ENCODE measurements at regions of chr22 and their contacts with region 1.

Region 1: GRCh38 chr22:45651931-45652528 is 19.6 kb upstream of the ATXN10 start:
- DNase-seq: no peak
- ATAC-seq: no peak
- H3K4me3 ChIP-seq: peak overlapping the region in 1 of 3 experiments; percentile 57; a peak in 2 of 6 replicates
- H3K27ac ChIP-seq: peak overlapping the region; percentile 77
- H3K4me1 ChIP-seq: peaks cover 72% of the 10 kb centered on the region
- H3K27me3 ChIP-seq: no peaks in the 10 kb centered on the region
- CTCF ChIP-seq: peak; percentile 20; the same call in 1 of the 2 replicates
- EP300 ChIP-seq: no peak
- POLR2A ChIP-seq: no peak
- RAD21 ChIP-seq: no peak

Region 2: GRCh38 chr22:45638834-45639746 is 12.9 kb before region 1 on chr22:
- CTCF ChIA-PET with region 1: no interaction called
- POLR2A ChIA-PET with region 1: no interaction called
- in situ Hi-C with region 1: no loop called
- intact Hi-C with region 1: no loop called
- DNase-seq: peak; percentile 57
- ATAC-seq: peak; percentile 65
- H3K4me3 ChIP-seq: peak overlapping the region in 2 of 3 experiments; percentile 31 to 50; a peak in 3 of 6 replicates
- H3K27ac ChIP-seq: no peak overlapping the region
- H3K4me1 ChIP-seq: peaks cover 65% of the 10 kb centered on the region
- H3K27me3 ChIP-seq: no peaks in the 10 kb centered on the region; a peak in 1 of 5 replicates
- CTCF ChIP-seq: peak; percentile 30
- EP300 ChIP-seq: no peak; a peak in 1 of 4 replicates
- POLR2A ChIP-seq: no peak
- RAD21 ChIP-seq: no peak

Region 3: GRCh38 chr22:45671768-45672563 is 19.9 kb after region 1 on chr22 and contains the start of gene ATXN10:
- CTCF ChIA-PET with region 1: no interaction called
- POLR2A ChIA-PET with region 1: interaction called, 7 read pairs
- in situ Hi-C with region 1: no loop called
- intact Hi-C with region 1: loop called (anchors 2 kb)
- DNase-seq: peak; percentile 49
- ATAC-seq: peak; percentile 87
- H3K4me3 ChIP-seq: peak within 1 kb of the TSS; percentile 60 to 97 (median 74)
- H3K27ac ChIP-seq: peak within 1 kb of the TSS; percentile 85
- H3K4me1 ChIP-seq: peaks cover 70% of the 10 kb centered on the region
- H3K27me3 ChIP-seq: no peaks in the 10 kb centered on the region
- CTCF ChIP-seq: no peak
- EP300 ChIP-seq: 0 out of 4 replicates have a peak, but pooled peaks of 1 of the 2 experiments have one; percentile 5
- POLR2A ChIP-seq: peak; percentile 65 to 68
- RAD21 ChIP-seq: 0 out of 2 replicates have a peak, but pooled peaks have one; percentile 15
- total RNA-seq, gene ATXN10: 60.1 and 136 TPM in 2 replicates

Region 4: GRCh38 chr22:45742866-45743450 is 90.9 kb after region 1 on chr22:
- CTCF ChIA-PET with region 1: no interaction called
- POLR2A ChIA-PET with region 1: no interaction called
- in situ Hi-C with region 1: no loop called
- intact Hi-C with region 1: loop called (anchors 2 kb)
- DNase-seq: peak; percentile 96
- ATAC-seq: peak; percentile 98
- H3K4me3 ChIP-seq: peak overlapping the region in 2 of 3 experiments; percentile 17 to 26; a peak in 1 of 6 replicates
- H3K27ac ChIP-seq: peak overlapping the region; percentile 87
- H3K4me1 ChIP-seq: peaks cover 63% of the 10 kb centered on the region
- H3K27me3 ChIP-seq: no peaks in the 10 kb centered on the region
- CTCF ChIP-seq: peak; percentile 11; the same call in 1 of the 2 replicates
- EP300 ChIP-seq: peak; percentile 98 to 99
- POLR2A ChIP-seq: no peak
- RAD21 ChIP-seq: no peak; the same call in 1 of the 2 replicates